Left ventricle myocardium inferior (tissue), 1 donor: ENCODE measurements at regions of chr4 and their contacts with region 1.

Region 1: DNA sequence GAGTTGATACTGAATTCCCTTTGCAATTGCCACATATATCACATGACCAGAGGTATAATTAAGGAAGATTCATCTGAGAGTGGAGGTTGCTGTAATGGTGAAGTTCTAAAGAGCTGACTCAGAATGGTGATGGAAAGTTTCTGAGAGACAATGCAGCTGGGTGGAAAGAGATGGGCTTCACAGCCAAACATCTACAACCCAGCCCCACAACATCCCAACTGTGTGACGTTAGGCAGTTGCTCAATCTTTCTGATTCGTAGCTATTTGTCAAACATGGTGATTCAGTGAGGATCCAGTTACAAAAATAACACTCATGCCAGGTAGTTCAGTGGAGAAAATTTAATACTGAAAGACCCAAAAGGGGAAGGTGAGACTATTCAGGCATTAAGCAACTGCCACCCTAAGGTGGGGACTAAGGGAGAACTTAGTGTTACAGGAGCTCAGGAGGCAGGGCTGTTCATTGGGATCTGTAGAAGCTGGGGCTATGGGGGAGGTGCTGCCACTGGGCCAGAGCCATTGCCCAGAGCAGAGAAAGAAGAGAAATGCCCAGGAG is 6.9 kb upstream of the AFF1 start:
- DNase-seq: no peak
- H3K4me3 ChIP-seq: no peak overlapping the region
- H3K27ac ChIP-seq: no peak overlapping the region
- H3K4me1 ChIP-seq: no peaks in the 10 kb centered on the region
- H3K27me3 ChIP-seq: no peaks in the 10 kb centered on the region
- CTCF ChIP-seq: no peak

Region 2: DNA sequence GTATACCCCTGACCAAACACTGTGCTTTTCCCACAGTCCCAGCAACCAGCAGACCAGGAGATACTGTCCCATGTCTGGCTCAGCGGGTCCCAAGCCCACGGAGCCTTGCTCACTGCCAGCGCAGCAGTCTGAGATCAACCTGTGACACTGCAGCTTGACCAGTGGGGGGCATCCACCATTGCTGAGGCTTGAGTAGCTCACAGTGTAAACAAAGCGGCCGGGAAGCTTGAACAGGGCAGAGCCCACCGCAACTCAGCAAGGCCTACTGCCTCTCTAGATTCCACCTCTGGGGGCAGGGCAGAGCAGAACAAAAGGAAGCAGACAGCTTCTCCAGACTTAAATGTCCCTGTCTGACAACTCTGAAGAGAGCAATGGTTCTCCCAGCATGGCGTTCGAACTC is 136.8 kb before region 1 on chr4:
- intact Hi-C with region 1: no loop called
- DNase-seq: no peak
- H3K4me3 ChIP-seq: no peak overlapping the region
- H3K27ac ChIP-seq: no peak overlapping the region
- H3K4me1 ChIP-seq: no peaks in the 10 kb centered on the region
- H3K27me3 ChIP-seq: no peaks in the 10 kb centered on the region
- CTCF ChIP-seq: peak; percentile 17

Region 3: DNA sequence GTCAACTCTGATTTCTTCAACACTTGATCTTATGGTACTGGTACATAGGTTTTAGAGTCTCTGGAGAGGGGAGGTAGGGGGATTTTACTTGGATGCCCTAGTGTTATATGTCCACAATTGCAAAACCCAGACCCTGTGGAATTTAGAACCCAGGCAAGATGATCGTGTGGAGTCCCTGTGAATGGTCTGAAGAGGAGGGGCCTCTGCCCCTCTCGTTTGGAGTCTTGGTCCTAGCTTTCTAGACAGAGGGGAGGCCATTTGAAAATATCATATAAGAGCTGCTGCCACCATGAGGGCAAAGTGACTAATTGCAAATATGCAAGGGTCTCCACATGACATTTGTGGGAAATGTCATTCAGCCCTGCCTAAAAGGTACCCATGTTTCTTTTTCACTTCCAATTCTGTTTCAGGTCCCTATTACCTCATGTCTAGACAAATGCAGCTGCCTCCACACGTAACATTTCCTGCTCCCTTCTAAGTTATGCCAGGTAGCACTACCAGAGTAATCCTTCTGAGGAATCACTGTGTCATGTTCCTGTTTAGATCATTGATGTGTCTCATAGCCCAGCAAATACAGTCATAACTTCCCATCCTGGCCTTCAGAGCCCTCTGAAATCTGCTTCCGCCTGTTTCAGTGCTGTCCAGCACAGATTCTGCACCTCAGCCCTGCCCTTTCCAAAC is 165.7 kb after region 1 on chr4:
- intact Hi-C with region 1: loop called (anchors 5 kb)
- DNase-seq: no peak
- H3K4me3 ChIP-seq: no peak overlapping the region
- H3K27ac ChIP-seq: peak overlapping the region; percentile 55
- H3K4me1 ChIP-seq: peaks cover 63% of the 10 kb centered on the region
- H3K27me3 ChIP-seq: no peaks in the 10 kb centered on the region
- CTCF ChIP-seq: peak; percentile 74

Region 4: GRCh38 chr4:87166296-87166854 is 238.5 kb after region 1 on chr4:
- intact Hi-C with region 1: no loop called
- DNase-seq: no peak
- H3K4me3 ChIP-seq: no peak overlapping the region
- H3K27ac ChIP-seq: no peak overlapping the region
- H3K4me1 ChIP-seq: no peaks in the 10 kb centered on the region
- H3K27me3 ChIP-seq: no peaks in the 10 kb centered on the region
- CTCF ChIP-seq: no peak

Region 5: GRCh38 chr4:87235020-87235671 is 307.2 kb after region 1 on chr4:
- intact Hi-C with region 1: loop called (anchors 10 kb)
- DNase-seq: no peak
- H3K4me3 ChIP-seq: peak overlapping the region; percentile 60
- H3K27ac ChIP-seq: no peak overlapping the region
- H3K4me1 ChIP-seq: peaks cover 12% of the 10 kb centered on the region
- H3K27me3 ChIP-seq: no peaks in the 10 kb centered on the region
- CTCF ChIP-seq: no peak